ENCODE measurements at regions of chrX and their contacts with region 1.

Region 1: DNA sequence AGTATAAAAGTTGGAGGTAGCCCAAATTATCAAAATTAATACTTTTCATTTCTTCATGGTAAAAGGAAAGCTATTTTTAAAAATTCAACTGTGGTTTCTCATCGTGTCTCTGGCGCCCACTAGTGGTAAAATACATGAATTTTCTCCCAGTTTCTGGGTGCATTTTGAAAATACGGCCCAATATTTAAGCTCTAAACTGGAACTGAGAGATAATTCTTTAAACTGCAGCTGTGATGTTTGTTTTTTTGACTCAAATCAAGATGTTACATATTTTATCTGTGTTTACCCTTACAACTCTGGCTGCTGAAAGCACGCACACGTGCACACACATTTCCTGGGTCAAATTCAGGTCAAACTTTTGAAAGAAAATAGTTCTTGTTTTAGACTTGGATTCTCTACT is 123.9 kb upstream of the ACSL4 start:
- DNase-seq: no peak
- H3K4me3 ChIP-seq: no peak overlapping the region
- H3K27ac ChIP-seq: no peak overlapping the region
- H3K4me1 ChIP-seq: peaks cover 7% of the 10 kb centered on the region; the same call in 1 of the 2 replicates
- H3K27me3 ChIP-seq: no peaks in the 10 kb centered on the region
- CTCF ChIP-seq: peak; percentile 96

Region 2: DNA sequence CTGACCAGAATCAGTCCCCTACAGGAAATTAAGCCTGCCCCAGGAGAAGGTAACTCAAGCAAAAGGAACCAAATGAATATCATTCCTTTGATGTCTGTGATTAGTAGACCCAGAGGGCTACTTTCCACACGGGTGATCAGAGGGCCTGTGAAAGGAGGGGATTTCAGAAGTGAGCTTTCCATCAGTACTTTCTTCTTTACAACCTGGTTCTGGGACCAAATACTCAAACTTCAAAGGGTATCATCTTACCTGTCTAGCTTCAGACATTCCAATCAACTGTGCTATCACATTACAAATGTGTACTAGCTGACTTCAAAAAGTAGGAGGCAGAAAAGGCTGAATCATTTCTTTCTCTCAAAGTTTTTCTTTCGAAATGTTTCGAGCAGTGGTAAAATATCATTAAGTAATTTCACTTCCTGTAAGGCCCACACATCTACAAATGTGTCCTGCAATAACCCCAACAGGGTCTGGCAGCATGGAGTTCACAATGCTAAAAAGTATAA is 147.8 kb before region 1 on chrX:
- CTCF ChIA-PET with region 1: interaction called, 26 read pairs
- POLR2A ChIA-PET with region 1: interaction called, 6 read pairs
- intact Hi-C with region 1: loop called (anchors 1 kb)
- DNase-seq: peak; percentile 3 to 88
- H3K4me3 ChIP-seq: peak overlapping the region; percentile 13; the same call in 1 of the 2 replicates
- H3K27ac ChIP-seq: peak overlapping the region; percentile 74
- H3K4me1 ChIP-seq: peaks cover 33% of the 10 kb centered on the region
- H3K27me3 ChIP-seq: no peaks in the 10 kb centered on the region
- CTCF ChIP-seq: no peak

Region 3: DNA sequence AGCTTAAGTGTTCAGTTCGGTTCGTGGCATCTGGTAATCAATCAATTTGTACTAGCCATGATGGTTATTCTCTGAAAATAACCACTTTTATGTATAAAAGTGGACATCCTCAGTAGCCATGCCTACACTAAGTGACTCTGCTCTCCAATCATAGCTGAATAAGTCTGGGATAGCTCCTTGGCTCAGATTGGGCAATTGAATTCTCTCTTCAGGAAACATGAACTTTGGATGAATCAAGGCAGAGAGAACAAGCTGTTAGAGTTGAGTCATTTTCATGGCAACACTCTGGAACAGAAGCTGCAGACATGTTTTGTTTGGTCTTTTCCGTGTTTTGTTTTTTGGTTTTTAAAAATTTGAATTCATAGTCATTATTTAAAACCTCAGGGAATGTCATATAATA is 79.1 kb after region 1 on chrX:
- CTCF ChIA-PET with region 1: no interaction called
- POLR2A ChIA-PET with region 1: no interaction called
- intact Hi-C with region 1: no loop called
- DNase-seq: no peak
- H3K4me3 ChIP-seq: no peak overlapping the region
- H3K27ac ChIP-seq: no peak overlapping the region
- H3K4me1 ChIP-seq: no peaks in the 10 kb centered on the region
- H3K27me3 ChIP-seq: no peaks in the 10 kb centered on the region
- CTCF ChIP-seq: no peak